Endothelial cell of umbilical vein (primary cell): ENCODE measurements at regions of chr19 and their contacts with region 1.

Region 1: GRCh38 chr19:42132851-42133528 is 744 bp upstream of the POU2F2 start:
- DNase-seq: peak; percentile 45
- H3K4me3 ChIP-seq: peak overlapping the region in 1 of 3 experiments; percentile 23
- H3K27ac ChIP-seq: no peak overlapping the region
- H3K4me1 ChIP-seq: peaks cover 6% of the 10 kb centered on the region
- H3K27me3 ChIP-seq: no peaks in the 10 kb centered on the region
- CTCF ChIP-seq: peak; percentile 83 to 99
- POLR2A ChIP-seq: no peak

Region 2: DNA sequence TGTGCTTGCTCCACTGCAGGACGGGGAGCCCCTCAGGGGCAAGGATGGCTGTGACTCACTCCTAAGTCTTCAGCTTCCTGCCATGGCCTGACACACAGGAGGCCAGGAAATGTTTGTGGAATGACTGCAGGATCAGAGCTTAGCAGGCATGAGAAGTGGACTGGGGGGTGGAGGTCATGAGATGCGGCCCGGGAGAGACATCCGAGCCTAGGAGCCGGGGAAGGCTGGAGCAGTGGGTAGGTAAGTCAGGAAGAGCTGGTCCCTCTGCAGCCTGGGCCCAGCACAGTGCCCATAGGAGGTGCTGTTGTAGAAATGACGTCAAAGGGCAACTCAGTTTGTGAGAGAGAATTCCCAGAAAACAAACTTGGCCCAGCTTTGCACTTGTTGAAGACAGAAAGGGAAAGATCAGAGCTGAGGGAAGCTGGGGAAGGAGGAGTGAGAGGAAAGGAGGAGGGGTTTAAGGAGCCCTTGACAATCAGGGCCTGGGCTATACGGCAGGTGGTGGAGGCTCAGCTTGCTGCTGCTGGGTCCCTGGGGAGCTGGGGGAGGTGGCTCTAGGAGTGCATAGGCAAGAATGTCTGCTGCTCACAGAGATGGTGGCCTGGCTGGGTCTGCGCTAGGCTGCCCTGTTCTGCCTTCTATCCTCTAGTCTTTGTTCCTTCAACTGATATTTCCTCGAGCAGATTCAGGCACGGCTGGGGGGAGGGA is 19.2 kb before region 1 on chr19:
- CTCF ChIA-PET with region 1: interaction called, 33 read pairs
- POLR2A ChIA-PET with region 1: no interaction called
- dilution Hi-C with region 1: no loop called
- intact Hi-C with region 1: loop called (anchors 1 kb)
- DNase-seq: peak; percentile 97
- H3K4me3 ChIP-seq: no peak overlapping the region
- H3K27ac ChIP-seq: peak overlapping the region; percentile 88
- H3K4me1 ChIP-seq: peaks cover 29% of the 10 kb centered on the region
- H3K27me3 ChIP-seq: no peaks in the 10 kb centered on the region
- CTCF ChIP-seq: peak; percentile 26 to 47
- POLR2A ChIP-seq: peak; percentile 42

Region 3: GRCh38 chr19:42176990-42177685 is 44.1 kb after region 1 on chr19:
- CTCF ChIA-PET with region 1: interaction called, 14 read pairs
- POLR2A ChIA-PET with region 1: no interaction called
- dilution Hi-C with region 1: no loop called
- intact Hi-C with region 1: no loop called
- DNase-seq: peak; percentile 60
- H3K4me3 ChIP-seq: no peak overlapping the region
- H3K27ac ChIP-seq: no peak overlapping the region
- H3K4me1 ChIP-seq: peaks cover 8% of the 10 kb centered on the region
- H3K27me3 ChIP-seq: peaks cover 56 to 62% of the 10 kb centered on the region in 2 experiments
- CTCF ChIP-seq: peak; percentile 17 to 53
- POLR2A ChIP-seq: no peak

Region 4: DNA sequence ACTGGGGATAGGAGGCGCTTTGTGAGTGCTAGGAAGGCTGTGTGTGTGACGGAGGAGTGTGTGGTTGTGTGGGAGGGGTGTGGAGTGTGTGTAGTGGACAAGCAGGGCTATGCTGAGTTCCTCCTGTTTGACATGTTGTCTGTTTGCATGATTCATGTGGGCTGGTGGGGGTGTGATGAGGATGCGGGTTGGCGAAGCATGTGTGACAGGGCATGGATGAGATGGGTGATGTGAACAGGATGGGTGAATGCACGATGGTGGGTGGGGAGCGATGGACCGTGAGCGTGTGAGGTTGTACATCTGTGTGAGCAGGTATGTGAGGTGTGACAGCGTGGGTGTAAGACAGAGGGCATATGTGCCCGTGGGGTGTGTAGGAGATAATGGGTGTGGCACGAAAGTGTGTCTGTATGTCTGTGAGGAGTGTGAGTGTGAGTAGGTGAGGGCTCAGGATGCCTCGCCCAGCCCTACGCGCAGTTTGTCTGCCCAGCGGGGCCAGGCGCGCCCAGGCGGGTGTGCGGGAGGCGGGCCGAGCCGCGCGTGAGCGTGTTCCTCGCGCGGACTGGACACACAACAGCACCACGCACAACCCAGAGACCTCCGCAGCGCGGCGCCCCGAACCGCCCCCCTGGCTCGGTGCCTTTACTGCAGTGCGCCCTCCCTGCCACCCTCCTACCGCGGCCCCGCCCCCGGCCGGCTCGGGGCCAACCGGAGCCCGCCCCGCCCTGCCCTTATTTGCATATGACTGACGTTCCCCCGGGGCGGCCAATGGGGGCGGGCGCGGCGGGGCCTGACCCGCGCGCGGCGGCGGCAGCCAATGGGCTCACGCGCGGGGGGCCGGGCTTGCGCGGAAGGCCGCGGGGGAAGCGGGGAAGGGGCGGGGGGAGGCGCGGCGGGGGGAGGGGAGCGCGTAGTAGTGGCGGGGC is 150.4 kb after region 1 on chr19:
- CTCF ChIA-PET with region 1: interaction called, 6 read pairs
- POLR2A ChIA-PET with region 1: no interaction called
- dilution Hi-C with region 1: no loop called
- intact Hi-C with region 1: loop called (anchors 2 kb)
- DNase-seq: peak; percentile 95
- H3K4me3 ChIP-seq: peak overlapping the region in 2 of 3 experiments; percentile 3 to 35
- H3K27ac ChIP-seq: no peak overlapping the region
- H3K4me1 ChIP-seq: peaks cover 53% of the 10 kb centered on the region
- H3K27me3 ChIP-seq: no peaks in the 10 kb centered on the region
- CTCF ChIP-seq: no peak
- POLR2A ChIP-seq: no peak

Region 5: DNA sequence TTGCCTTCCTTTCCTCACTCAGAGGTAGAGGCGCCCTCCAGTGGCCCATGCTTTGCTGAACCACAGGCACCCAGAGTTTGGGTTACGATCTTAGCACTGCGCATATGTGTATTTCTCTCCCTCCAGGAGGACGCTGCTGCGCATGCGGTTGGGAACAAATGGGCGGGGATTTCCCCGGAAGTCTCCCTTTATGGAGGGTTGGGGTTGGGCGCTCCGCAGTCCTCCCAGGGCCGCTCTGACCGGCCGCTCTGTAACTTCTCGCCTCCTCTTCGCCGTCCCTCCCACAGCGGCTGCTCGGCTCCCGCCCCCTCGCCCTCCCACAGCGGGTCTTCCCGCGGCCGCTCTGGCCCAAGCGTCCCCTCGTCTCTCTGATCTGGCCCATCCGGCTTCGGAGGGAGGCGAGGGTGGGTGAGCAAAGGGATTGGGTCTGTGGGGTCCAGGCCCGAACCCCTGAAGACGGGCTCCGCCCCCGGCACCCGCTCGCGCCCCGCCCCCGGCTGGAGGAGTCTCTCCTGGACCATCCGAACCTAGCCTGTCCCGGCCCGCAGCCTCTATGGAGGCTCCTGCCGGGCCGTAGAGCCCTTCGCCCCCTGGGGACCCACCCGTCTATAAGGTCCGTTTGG is 192.4 kb after region 1 on chr19 and contains the start of gene MEGF8:
- CTCF ChIA-PET with region 1: no interaction called
- POLR2A ChIA-PET with region 1: no interaction called
- dilution Hi-C with region 1: no loop called
- intact Hi-C with region 1: loop called (anchors 1 kb)
- DNase-seq: peak; percentile 100
- H3K4me3 ChIP-seq: peak within 1 kb of the TSS; percentile 50 to 78 (median 69)
- H3K27ac ChIP-seq: no peak within 1 kb of the TSS
- H3K4me1 ChIP-seq: peaks cover 8% of the 10 kb centered on the region
- H3K27me3 ChIP-seq: peaks cover 19 to 27% of the 10 kb centered on the region in 2 experiments
- CTCF ChIP-seq: peak; percentile 90 to 96
- POLR2A ChIP-seq: no peak
- total RNA-seq, gene MEGF8: 34.3 and 39.6 TPM in 2 replicates